GM18951 (cell line): ENCODE measurements at regions of chr15 and their contacts with region 1.

Region 1: GRCh38 chr15:74295800-74296199 is 59.7 kb downstream of the CCDC33 start:
- POLR2A ChIP-seq: no peak

Region 2: GRCh38 chr15:74127260-74127953 is 168.4 kb before region 1 on chr15:
- in situ Hi-C with region 1: loop called (anchors 5 kb)
- POLR2A ChIP-seq: no peak